ENCODE measurements at regions of chr7 and their contacts with region 1.

Region 1: GRCh38 chr7:45026984-45027773 is 27.2 kb downstream of the CCM2 start:
- DNase-seq: peak in 7 of 9 donors; percentile 42 to 79 (median 71)
- ATAC-seq: peak; percentile 81
- H3K4me3 ChIP-seq: peak overlapping the region; percentile 87
- H3K4me3 Mint-ChIP-seq: peak overlapping the region; percentile 89 to 98 (median 95)
- H3K27ac ChIP-seq: peak overlapping the region; percentile 86
- H3K27ac Mint-ChIP-seq: peak overlapping the region; percentile 80 to 97 (median 93)
- H3K4me1 ChIP-seq: peaks cover 34 to 57% of the 10 kb centered on the region in 2 donors
- H3K4me1 Mint-ChIP-seq: peaks cover 44 to 70% (median 62%) of the 10 kb centered on the region in 7 donors
- H3K27me3 ChIP-seq: no peaks in the 10 kb centered on the region
- H3K27me3 Mint-ChIP-seq: no peaks in the 10 kb centered on the region

Region 2: GRCh38 chr7:44712012-44712411 is 315.2 kb before region 1 on chr7:
- CTCF ChIA-PET with region 1: no interaction called
- POLR2A ChIA-PET with region 1: no interaction called
- intact Hi-C with region 1: no loop called
- DNase-seq: no peak
- ATAC-seq: no peak
- H3K4me3 ChIP-seq: no peak overlapping the region
- H3K4me3 Mint-ChIP-seq: no peak overlapping the region
- H3K27ac ChIP-seq: peak overlapping the region; percentile 14
- H3K27ac Mint-ChIP-seq: peak overlapping the region in 6 of 9 donors; percentile 9 to 76 (median 44)
- H3K4me1 ChIP-seq: peaks cover 0 to 6% of the 10 kb centered on the region in 2 donors
- H3K4me1 Mint-ChIP-seq: peaks cover 4 to 11% (median 7%) of the 10 kb centered on the region in 7 donors
- H3K27me3 ChIP-seq: no peaks in the 10 kb centered on the region
- H3K27me3 Mint-ChIP-seq: no peaks in the 10 kb centered on the region

Region 3: DNA sequence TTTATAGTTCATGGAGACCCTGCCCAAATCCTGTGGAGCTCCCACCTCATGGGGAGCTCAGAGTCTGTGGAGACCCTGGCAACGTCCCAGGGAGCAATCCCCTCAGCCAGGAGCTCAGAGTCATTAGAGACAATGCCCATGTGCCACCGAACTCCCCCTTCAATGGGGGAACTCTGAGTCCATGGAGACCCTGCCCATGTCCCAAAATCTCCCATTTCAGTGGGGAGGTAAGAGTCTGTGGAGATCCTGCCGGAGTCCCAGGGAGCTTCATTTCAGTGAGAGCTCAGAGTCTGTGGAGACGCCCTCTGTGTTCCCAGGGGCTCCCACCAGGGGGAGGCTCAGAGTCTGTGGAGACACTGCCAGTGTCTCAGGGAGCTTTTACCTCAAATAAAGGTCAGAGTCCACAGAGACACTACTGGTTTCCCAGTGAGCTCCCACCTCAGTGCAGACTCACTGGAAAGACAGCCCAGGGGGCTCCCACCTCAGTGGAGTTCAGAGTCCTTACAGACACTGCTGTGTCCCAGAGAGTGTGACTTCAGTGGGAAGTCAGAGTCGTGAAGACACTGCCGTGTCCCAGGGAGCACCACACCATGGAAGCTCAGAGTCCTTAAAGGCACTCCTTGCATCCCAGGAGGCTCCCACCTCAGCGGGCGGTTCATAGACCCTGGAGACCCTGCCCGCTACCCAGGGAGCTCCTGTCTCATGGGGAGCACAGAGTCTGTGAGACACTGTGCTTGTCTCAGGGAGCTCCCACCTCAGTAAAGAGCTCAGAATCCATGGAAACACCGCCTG is 53.4 kb before region 1 on chr7:
- CTCF ChIA-PET with region 1: interaction called, 65 read pairs
- POLR2A ChIA-PET with region 1: interaction called, 200 read pairs
- intact Hi-C with region 1: loop called (anchors 1 kb)
- DNase-seq: peak in 7 of 9 donors; percentile 52 to 70 (median 66)
- ATAC-seq: peak; percentile 31
- H3K4me3 ChIP-seq: no peak overlapping the region
- H3K4me3 Mint-ChIP-seq: peak overlapping the region in 4 of 10 donors; percentile 5 to 23 (median 10)
- H3K27ac ChIP-seq: peak overlapping the region; percentile 83
- H3K27ac Mint-ChIP-seq: peak overlapping the region in 8 of 9 donors; percentile 18 to 88 (median 67)
- H3K4me1 ChIP-seq: peaks cover 28 to 46% of the 10 kb centered on the region in 2 donors
- H3K4me1 Mint-ChIP-seq: peaks cover 29 to 59% (median 40%) of the 10 kb centered on the region in 7 donors
- H3K27me3 ChIP-seq: no peaks in the 10 kb centered on the region
- H3K27me3 Mint-ChIP-seq: no peaks in the 10 kb centered on the region

Region 4: GRCh38 chr7:44986218-44987053 is 40.7 kb before region 1 on chr7:
- CTCF ChIA-PET with region 1: no interaction called
- POLR2A ChIA-PET with region 1: interaction called, 200 read pairs
- intact Hi-C with region 1: loop called in 1 of 2 experiments (anchors 1 kb)
- DNase-seq: peak; percentile 93 to 97 (median 96)
- ATAC-seq: peak; percentile 98
- H3K4me3 ChIP-seq: peak overlapping the region; percentile 92
- H3K4me3 Mint-ChIP-seq: peak overlapping the region; percentile 94 to 100 (median 97)
- H3K27ac ChIP-seq: peak overlapping the region; percentile 97
- H3K27ac Mint-ChIP-seq: peak overlapping the region; percentile 97 to 99 (median 98)
- H3K4me1 ChIP-seq: peaks cover 25 to 33% of the 10 kb centered on the region in 2 donors
- H3K4me1 Mint-ChIP-seq: peaks cover 24 to 66% (median 56%) of the 10 kb centered on the region in 7 donors
- H3K27me3 ChIP-seq: no peaks in the 10 kb centered on the region
- H3K27me3 Mint-ChIP-seq: no peaks in the 10 kb centered on the region

Region 5: DNA sequence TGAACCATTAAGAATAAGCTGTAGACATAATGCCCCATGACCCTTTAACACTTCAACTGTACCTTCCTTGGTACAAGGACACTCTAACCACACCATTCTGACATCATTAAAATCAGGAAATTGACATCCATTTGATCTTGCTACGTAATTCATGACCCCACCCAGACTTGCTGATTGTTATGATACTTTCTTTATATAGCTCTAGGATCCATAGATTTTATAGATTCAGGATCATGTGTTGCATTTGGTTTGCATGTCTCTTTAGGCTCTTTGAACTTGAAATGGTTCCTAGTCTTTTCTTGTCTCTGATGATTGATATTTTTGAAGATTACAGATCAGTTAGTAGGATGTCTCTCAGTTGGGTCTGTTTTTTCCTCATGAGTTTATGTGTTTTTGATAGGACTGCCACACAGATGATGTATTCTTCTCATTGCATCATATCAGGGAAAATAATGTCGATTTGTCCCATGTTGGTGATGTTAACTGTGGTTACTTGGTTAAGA is 13.7 kb before region 1 on chr7:
- CTCF ChIA-PET with region 1: interaction called, 3 read pairs
- POLR2A ChIA-PET with region 1: interaction called, 88 read pairs
- intact Hi-C with region 1: loop called (anchors 1 kb)
- DNase-seq: peak in 7 of 9 donors; percentile 39 to 69 (median 63)
- ATAC-seq: peak; percentile 88
- H3K4me3 ChIP-seq: no peak overlapping the region
- H3K4me3 Mint-ChIP-seq: peak overlapping the region in 7 of 10 donors; percentile 1 to 53 (median 20)
- H3K27ac ChIP-seq: peak overlapping the region; percentile 8
- H3K27ac Mint-ChIP-seq: peak overlapping the region; percentile 28 to 94 (median 78)
- H3K4me1 ChIP-seq: peaks cover 6 to 11% of the 10 kb centered on the region in 2 donors
- H3K4me1 Mint-ChIP-seq: peaks cover 21 to 57% (median 51%) of the 10 kb centered on the region in 7 donors
- H3K27me3 ChIP-seq: no peaks in the 10 kb centered on the region
- H3K27me3 Mint-ChIP-seq: no peaks in the 10 kb centered on the region

Region 6: DNA sequence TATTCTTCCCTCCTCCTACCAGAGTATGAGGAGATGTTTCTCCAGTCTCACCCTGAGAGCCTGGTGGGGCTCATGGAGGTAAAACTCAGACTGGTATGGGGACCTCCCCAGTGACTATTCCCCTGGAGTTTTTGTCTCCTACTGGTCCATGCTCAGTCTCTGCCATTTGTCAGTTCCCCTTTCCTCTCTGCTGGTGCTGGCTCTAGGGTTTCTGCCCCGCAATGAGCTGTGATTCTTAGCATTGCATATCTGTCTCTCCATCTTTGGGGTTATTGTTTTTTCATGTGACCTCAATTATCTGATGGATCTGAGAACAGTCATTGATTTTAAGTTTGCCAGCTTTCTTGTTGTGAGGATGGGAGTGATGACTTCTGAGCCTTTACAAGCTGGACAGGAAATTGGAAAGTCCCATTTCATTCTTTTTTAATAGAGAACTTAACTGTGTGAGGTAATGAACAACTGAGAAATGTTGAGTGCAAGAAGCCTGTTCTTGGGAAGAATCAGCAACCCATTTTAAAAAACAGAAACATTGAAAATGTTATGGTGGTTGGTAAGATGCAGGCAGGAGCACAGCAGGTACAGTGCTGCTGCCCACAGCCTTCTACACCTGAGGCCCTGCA is 34.7 kb after region 1 on chr7:
- CTCF ChIA-PET with region 1: interaction called, 3 read pairs
- POLR2A ChIA-PET with region 1: interaction called, 11 read pairs
- intact Hi-C with region 1: loop called in 1 of 2 experiments (anchors 5 kb)
- DNase-seq: no peak
- ATAC-seq: no peak
- H3K4me3 ChIP-seq: no peak overlapping the region
- H3K4me3 Mint-ChIP-seq: peak overlapping the region in 4 of 10 donors; percentile 15 to 55 (median 46)
- H3K27ac ChIP-seq: peak overlapping the region; percentile 3
- H3K27ac Mint-ChIP-seq: peak overlapping the region; percentile 48 to 91 (median 71)
- H3K4me1 ChIP-seq: peaks cover 5 to 26% of the 10 kb centered on the region in 2 donors
- H3K4me1 Mint-ChIP-seq: peaks cover 37 to 80% (median 68%) of the 10 kb centered on the region in 7 donors
- H3K27me3 ChIP-seq: no peaks in the 10 kb centered on the region
- H3K27me3 Mint-ChIP-seq: no peaks in the 10 kb centered on the region

Measured in naive thymus-derived CD4-positive, alpha-beta T cell (primary cell).